ENCODE measurements at regions of chr22 and their contacts with region 1.

Region 1: GRCh38 chr22:20885557-20886323 is 26.9 kb downstream of the SNAP29 start:
- DNase-seq: peak; percentile 55 to 84 (median 74)
- H3K4me3 ChIP-seq: no peak overlapping the region
- H3K27ac ChIP-seq: no peak overlapping the region
- H3K4me1 ChIP-seq: no peaks in the 10 kb centered on the region
- H3K27me3 ChIP-seq: no peaks in the 10 kb centered on the region
- CTCF ChIP-seq: peak; percentile 31 to 70 (median 57)
- EP300 ChIP-seq: no peak
- POLR2A ChIP-seq: no peak

Region 2: GRCh38 chr22:21102659-21103267 is 217.0 kb after region 1 on chr22:
- intact Hi-C with region 1: loop called in 1 of 4 experiments (anchors 10 kb)
- DNase-seq: peak; percentile 32 to 78 (median 63)
- H3K4me3 ChIP-seq: no peak overlapping the region
- H3K27ac ChIP-seq: no peak overlapping the region
- H3K4me1 ChIP-seq: no peaks in the 10 kb centered on the region
- H3K27me3 ChIP-seq: no peaks in the 10 kb centered on the region
- CTCF ChIP-seq: peak; percentile 29 to 59 (median 32)
- EP300 ChIP-seq: no peak
- POLR2A ChIP-seq: no peak